ENCODE measurements at regions of chr14 and their contacts with region 1.

Region 1: GRCh38 chr14:67762051-67762450 is 54.3 kb downstream of the ZFYVE26 start:
- DNase-seq: no peak
- H3K4me3 ChIP-seq: no peak overlapping the region
- H3K27ac ChIP-seq: no peak overlapping the region
- H3K4me1 ChIP-seq: peaks cover 47% of the 10 kb centered on the region
- H3K27me3 ChIP-seq: no peaks in the 10 kb centered on the region
- CTCF ChIP-seq: no peak

Region 2: DNA sequence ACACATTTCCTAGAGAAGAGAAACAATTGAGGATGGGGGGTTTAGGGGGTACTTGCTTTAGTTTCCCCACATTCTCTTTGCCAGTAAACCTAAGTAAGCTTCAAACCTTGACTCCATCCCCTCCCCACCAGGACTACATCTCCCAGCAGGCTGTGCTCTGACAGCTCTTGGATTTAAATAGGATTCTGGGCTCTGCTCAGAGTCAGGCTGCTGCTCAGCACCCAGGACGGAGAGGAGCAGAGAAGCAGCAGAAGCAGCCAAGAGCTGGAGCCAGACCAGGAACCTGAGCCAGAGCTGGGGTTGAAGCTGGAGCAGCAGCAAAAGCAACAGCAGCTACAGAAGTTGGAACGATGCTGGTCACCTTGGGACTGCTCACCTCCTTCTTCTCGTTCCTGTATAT is 39.8 kb before region 1 on chr14:
- CTCF ChIA-PET with region 1: no interaction called
- POLR2A ChIA-PET with region 1: interaction called, 11 read pairs
- intact Hi-C with region 1: no loop called
- DNase-seq: no peak
- H3K4me3 ChIP-seq: no peak overlapping the region
- H3K27ac ChIP-seq: no peak overlapping the region
- H3K4me1 ChIP-seq: 0 out of 2 replicates have a peak, but pooled peaks cover 4% of the 10 kb centered on the region
- H3K27me3 ChIP-seq: no peaks in the 10 kb centered on the region; the same call in 1 of the 2 replicates
- CTCF ChIP-seq: no peak